CD8-positive, alpha-beta T cell (primary cell): ENCODE measurements at regions of chr11 and their contacts with region 1.

Region 1: GRCh38 chr11:87290304-87290922 is 252.7 kb downstream of the TMEM135 start:
- DNase-seq: peak in 2 of 9 experiments; percentile 56 to 67
- ATAC-seq: no peak
- H3K4me3 ChIP-seq: no peak overlapping the region
- H3K4me3 Mint-ChIP-seq: no peak overlapping the region
- H3K27ac ChIP-seq: no peak overlapping the region
- H3K27ac Mint-ChIP-seq: no peak overlapping the region
- H3K4me1 ChIP-seq: no peaks in the 10 kb centered on the region
- H3K4me1 Mint-ChIP-seq: no peaks in the 10 kb centered on the region
- H3K27me3 ChIP-seq: no peaks in the 10 kb centered on the region
- H3K27me3 Mint-ChIP-seq: no peaks in the 10 kb centered on the region
- CTCF ChIP-seq: peak; percentile 96

Region 2: DNA sequence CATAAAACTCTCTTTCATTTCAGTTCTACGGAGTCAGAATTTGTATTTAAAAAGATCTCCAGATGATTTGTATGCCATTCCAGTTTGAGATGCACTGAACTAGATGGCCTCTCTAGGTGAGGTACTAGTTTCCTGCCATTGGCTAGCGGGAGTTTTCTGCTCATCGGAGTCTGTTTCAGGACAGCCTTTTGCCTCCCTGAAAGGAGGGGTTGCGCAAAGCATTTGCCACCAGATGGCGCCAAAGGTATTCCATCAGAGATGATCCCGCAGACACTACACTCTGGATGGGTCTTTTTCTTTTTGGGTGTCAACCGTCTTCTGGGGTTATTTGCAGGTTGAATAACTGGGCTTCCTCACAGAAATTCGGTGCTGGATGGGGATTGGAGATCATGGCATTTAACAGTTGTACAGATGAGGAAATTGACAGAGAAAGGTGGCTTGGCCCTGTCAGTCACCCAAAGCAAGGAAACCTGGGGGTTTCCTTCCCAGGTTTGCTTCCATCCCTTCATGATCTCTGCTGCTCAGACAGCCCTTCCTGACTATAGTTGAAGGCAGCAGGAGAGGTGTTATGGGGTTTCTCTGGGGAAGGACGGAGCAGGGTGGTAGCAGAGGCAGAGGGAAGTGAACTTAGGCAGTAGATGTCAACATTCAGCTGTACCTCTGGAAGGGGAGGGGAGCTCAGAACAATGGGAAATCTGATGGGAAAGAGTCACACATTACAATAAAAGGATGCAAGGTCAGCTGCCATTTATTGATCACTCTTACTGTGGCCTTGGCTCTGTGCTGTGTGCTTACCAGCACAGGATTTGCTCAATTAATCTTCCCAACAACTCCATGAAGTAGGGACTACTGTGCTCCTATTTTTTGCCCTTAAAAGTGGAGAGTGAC is 834.1 kb before region 1 on chr11:
- CTCF ChIA-PET with region 1: no interaction called
- POLR2A ChIA-PET with region 1: no interaction called
- intact Hi-C with region 1: loop called in 1 of 2 experiments (anchors 2 kb)
- DNase-seq: peak; percentile 45 to 82 (median 71)
- ATAC-seq: no peak
- H3K4me3 ChIP-seq: no peak overlapping the region
- H3K4me3 Mint-ChIP-seq: no peak overlapping the region
- H3K27ac ChIP-seq: no peak overlapping the region
- H3K27ac Mint-ChIP-seq: no peak overlapping the region
- H3K4me1 ChIP-seq: no peaks in the 10 kb centered on the region
- H3K4me1 Mint-ChIP-seq: no peaks in the 10 kb centered on the region
- H3K27me3 ChIP-seq: no peaks in the 10 kb centered on the region
- H3K27me3 Mint-ChIP-seq: no peaks in the 10 kb centered on the region
- CTCF ChIP-seq: peak; percentile 75

Region 3: DNA sequence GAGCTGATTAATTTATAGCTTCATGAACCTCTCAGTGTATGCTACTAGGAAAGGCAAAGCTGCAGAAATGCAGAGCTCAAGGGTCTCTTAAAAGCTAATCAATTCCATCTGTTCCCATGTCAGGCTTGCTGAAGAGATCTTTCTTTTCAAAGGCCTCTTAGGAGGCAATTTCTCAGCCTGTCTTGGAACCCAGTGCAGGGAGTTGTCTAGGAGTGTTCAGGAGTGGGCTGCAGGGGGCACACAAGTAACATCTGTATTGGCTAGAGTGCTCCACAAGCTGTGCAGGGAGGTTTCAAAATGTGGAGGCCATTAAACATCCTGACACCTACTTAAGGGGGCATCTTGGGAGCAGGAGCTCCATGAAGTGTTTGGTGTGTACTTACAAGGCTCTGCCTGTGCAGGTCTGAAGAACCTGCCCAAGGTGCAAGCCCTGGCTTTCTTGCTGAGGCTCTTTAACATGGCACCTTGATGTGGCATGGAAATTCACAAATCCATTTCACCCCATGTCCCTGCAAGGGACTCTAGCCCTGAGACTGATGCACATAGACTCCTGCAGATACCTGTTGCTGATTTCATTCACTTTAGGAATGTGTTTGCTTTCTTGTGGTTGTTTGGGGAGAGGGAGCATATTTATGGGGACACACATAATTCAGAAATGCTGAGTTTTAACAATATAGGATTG is 752.7 kb before region 1 on chr11:
- CTCF ChIA-PET with region 1: no interaction called
- POLR2A ChIA-PET with region 1: no interaction called
- intact Hi-C with region 1: no loop called
- DNase-seq: no peak
- ATAC-seq: no peak
- H3K4me3 ChIP-seq: no peak overlapping the region
- H3K4me3 Mint-ChIP-seq: no peak overlapping the region
- H3K27ac ChIP-seq: no peak overlapping the region
- H3K27ac Mint-ChIP-seq: no peak overlapping the region
- H3K4me1 ChIP-seq: no peaks in the 10 kb centered on the region
- H3K4me1 Mint-ChIP-seq: no peaks in the 10 kb centered on the region
- H3K27me3 ChIP-seq: no peaks in the 10 kb centered on the region
- H3K27me3 Mint-ChIP-seq: no peaks in the 10 kb centered on the region
- CTCF ChIP-seq: no peak

Region 4: GRCh38 chr11:86869966-86870570 is 420.3 kb before region 1 on chr11:
- CTCF ChIA-PET with region 1: no interaction called
- POLR2A ChIA-PET with region 1: no interaction called
- intact Hi-C with region 1: loop called in 1 of 2 experiments (anchors 1 kb)
- DNase-seq: peak in 7 of 9 experiments; percentile 17 to 47 (median 23)
- ATAC-seq: no peak
- H3K4me3 ChIP-seq: no peak overlapping the region
- H3K4me3 Mint-ChIP-seq: no peak overlapping the region
- H3K27ac ChIP-seq: no peak overlapping the region
- H3K27ac Mint-ChIP-seq: no peak overlapping the region
- H3K4me1 ChIP-seq: no peaks in the 10 kb centered on the region
- H3K4me1 Mint-ChIP-seq: no peaks in the 10 kb centered on the region
- H3K27me3 ChIP-seq: no peaks in the 10 kb centered on the region
- H3K27me3 Mint-ChIP-seq: peaks cover 2% of the 10 kb centered on the region
- CTCF ChIP-seq: peak; percentile 67

Region 5: DNA sequence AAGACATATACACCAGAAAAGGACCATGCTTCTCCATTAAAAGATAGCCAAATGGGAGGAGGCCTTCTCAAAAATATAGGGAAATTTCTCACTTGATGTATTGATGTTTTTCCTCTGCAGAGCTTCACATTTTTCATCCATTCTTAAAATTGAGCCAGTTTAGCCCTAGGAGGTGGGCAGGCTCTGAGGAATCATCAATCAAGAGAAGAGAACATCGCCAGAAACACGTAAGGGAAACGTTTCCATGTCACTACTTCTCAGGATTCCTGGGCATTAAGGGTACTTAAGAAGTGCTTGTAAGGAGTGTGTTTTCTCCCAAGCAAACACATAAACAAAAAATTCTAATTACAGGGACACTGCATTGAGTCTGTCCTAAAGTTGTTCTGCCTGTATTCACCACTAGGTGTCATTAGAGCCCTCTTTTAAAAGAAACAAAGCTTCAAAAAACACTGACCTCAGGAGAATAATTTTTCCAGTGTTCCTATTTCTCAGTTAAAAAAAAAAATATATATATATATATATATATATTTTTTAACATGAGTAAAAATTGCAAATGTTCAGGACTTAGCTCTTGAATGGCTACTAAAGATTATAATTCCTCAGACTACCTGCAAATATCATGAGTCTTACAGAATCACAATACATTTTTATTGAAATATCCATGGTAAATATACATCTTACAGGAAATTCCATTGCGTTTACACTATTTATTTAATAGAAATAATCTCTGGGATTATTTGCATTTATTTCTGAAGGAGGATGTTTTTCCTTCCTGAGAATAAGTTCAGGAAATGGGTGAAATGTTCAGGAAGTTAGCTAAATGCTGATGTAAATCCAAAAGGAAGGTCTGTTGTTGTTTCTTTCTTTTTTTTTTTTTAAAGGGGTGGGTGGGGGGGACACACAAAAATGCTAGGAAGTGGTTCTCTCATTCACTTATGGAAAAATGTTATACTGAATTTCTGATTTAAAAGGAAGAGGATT is 351.2 kb before region 1 on chr11:
- CTCF ChIA-PET with region 1: interaction called, 24 read pairs
- POLR2A ChIA-PET with region 1: no interaction called
- intact Hi-C with region 1: loop called (anchors 1 kb)
- DNase-seq: peak in 2 of 9 experiments; percentile 53 to 60
- ATAC-seq: peak; percentile 52
- H3K4me3 ChIP-seq: no peak overlapping the region
- H3K4me3 Mint-ChIP-seq: no peak overlapping the region
- H3K27ac ChIP-seq: no peak overlapping the region
- H3K27ac Mint-ChIP-seq: no peak overlapping the region
- H3K4me1 ChIP-seq: no peaks in the 10 kb centered on the region
- H3K4me1 Mint-ChIP-seq: no peaks in the 10 kb centered on the region
- H3K27me3 ChIP-seq: no peaks in the 10 kb centered on the region
- H3K27me3 Mint-ChIP-seq: peaks cover 6% of the 10 kb centered on the region
- CTCF ChIP-seq: peak; percentile 72

Region 6: GRCh38 chr11:86978756-86979608 is 311.4 kb before region 1 on chr11:
- CTCF ChIA-PET with region 1: interaction called, 6 read pairs
- POLR2A ChIA-PET with region 1: interaction called, 3 read pairs
- intact Hi-C with region 1: loop called (anchors 1 kb)
- DNase-seq: peak in 2 of 9 experiments; percentile 47 to 60
- ATAC-seq: no peak
- H3K4me3 ChIP-seq: no peak overlapping the region
- H3K4me3 Mint-ChIP-seq: no peak overlapping the region
- H3K27ac ChIP-seq: no peak overlapping the region
- H3K27ac Mint-ChIP-seq: no peak overlapping the region
- H3K4me1 ChIP-seq: no peaks in the 10 kb centered on the region
- H3K4me1 Mint-ChIP-seq: no peaks in the 10 kb centered on the region
- H3K27me3 ChIP-seq: no peaks in the 10 kb centered on the region
- H3K27me3 Mint-ChIP-seq: no peaks in the 10 kb centered on the region
- CTCF ChIP-seq: peak; percentile 71

Region 7: GRCh38 chr11:86990515-86990914 is 299.9 kb before region 1 on chr11:
- CTCF ChIA-PET with region 1: interaction called, 3 read pairs
- POLR2A ChIA-PET with region 1: no interaction called
- intact Hi-C with region 1: loop called (anchors 1 kb)
- DNase-seq: no peak
- ATAC-seq: no peak
- H3K4me3 ChIP-seq: no peak overlapping the region
- H3K4me3 Mint-ChIP-seq: no peak overlapping the region
- H3K27ac ChIP-seq: no peak overlapping the region
- H3K27ac Mint-ChIP-seq: no peak overlapping the region
- H3K4me1 ChIP-seq: no peaks in the 10 kb centered on the region
- H3K4me1 Mint-ChIP-seq: no peaks in the 10 kb centered on the region
- H3K27me3 ChIP-seq: no peaks in the 10 kb centered on the region
- H3K27me3 Mint-ChIP-seq: peaks cover 7% of the 10 kb centered on the region
- CTCF ChIP-seq: no peak

Region 8: GRCh38 chr11:87300640-87301380 is 10.4 kb after region 1 on chr11:
- CTCF ChIA-PET with region 1: interaction called, 21 read pairs
- POLR2A ChIA-PET with region 1: no interaction called
- intact Hi-C with region 1: no loop called
- DNase-seq: peak in 1 of 9 experiments; percentile 8
- ATAC-seq: no peak
- H3K4me3 ChIP-seq: no peak overlapping the region
- H3K4me3 Mint-ChIP-seq: no peak overlapping the region
- H3K27ac ChIP-seq: no peak overlapping the region
- H3K27ac Mint-ChIP-seq: no peak overlapping the region
- H3K4me1 ChIP-seq: no peaks in the 10 kb centered on the region
- H3K4me1 Mint-ChIP-seq: peaks cover 7% of the 10 kb centered on the region
- H3K27me3 ChIP-seq: no peaks in the 10 kb centered on the region
- H3K27me3 Mint-ChIP-seq: no peaks in the 10 kb centered on the region
- CTCF ChIP-seq: no peak